ENCODE measurements at regions of chr17 and their contacts with region 1.

Region 1: GRCh38 chr17:7650509-7651096 is at the start of gene ATP1B2:
- DNase-seq: peak; percentile 60
- H3K4me3 Mint-ChIP-seq: peak within 1 kb of the TSS; percentile 84
- H3K27ac Mint-ChIP-seq: no peak within 1 kb of the TSS
- H3K4me1 Mint-ChIP-seq: peaks cover 11% of the 10 kb centered on the region
- H3K27me3 Mint-ChIP-seq: peaks cover 53% of the 10 kb centered on the region
- total RNA-seq, gene ATP1B2: 0.54 TPM in 2 replicates

Region 2: GRCh38 chr17:7627250-7628121 is 23.1 kb before region 1 on chr17 and contains the start of gene SAT2:
- intact Hi-C with region 1: loop called (anchors 1 kb)
- DNase-seq: peak; percentile 77
- H3K4me3 Mint-ChIP-seq: peak within 1 kb of the TSS; percentile 89
- H3K27ac Mint-ChIP-seq: peak within 1 kb of the TSS; percentile 77
- H3K4me1 Mint-ChIP-seq: peaks cover 18% of the 10 kb centered on the region
- H3K27me3 Mint-ChIP-seq: no peaks in the 10 kb centered on the region
- total RNA-seq, gene SAT2: 23.8 and 24.0 TPM in 2 replicates

Region 3: GRCh38 chr17:7903154-7904103 is 252.8 kb after region 1 on chr17:
- intact Hi-C with region 1: no loop called
- DNase-seq: no peak
- H3K4me3 Mint-ChIP-seq: no peak overlapping the region
- H3K27ac Mint-ChIP-seq: no peak overlapping the region
- H3K4me1 Mint-ChIP-seq: no peaks in the 10 kb centered on the region
- H3K27me3 Mint-ChIP-seq: no peaks in the 10 kb centered on the region